ENCODE measurements at regions of chr7 and their contacts with region 1.

Region 1: DNA sequence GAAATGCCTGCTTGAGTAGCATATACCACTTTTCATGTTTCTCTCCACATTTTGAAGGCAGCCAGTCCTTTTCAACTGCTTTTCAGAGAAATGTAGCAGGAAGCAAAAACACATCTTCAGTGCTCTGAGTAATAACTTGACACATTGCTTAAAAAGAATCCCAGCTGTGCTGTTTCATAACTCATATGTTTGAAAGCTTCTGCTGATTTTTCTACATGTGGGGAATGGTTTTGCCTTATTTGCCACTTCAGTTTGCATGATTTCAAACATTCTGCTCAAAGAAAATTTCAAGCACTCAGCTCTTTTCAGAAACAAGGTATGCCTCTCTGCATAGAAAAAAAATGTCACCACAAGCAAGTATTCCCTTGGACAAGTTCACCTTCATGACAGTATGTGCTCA is 732.8 kb downstream of the POM121L12 start:
- DNase-seq: no peak
- H3K4me3 ChIP-seq: no peak overlapping the region
- H3K27ac ChIP-seq: no peak overlapping the region
- H3K4me1 ChIP-seq: no peaks in the 10 kb centered on the region
- H3K27me3 ChIP-seq: no peaks in the 10 kb centered on the region
- CTCF ChIP-seq: no peak
- POLR2A ChIP-seq: no peak

Region 2: DNA sequence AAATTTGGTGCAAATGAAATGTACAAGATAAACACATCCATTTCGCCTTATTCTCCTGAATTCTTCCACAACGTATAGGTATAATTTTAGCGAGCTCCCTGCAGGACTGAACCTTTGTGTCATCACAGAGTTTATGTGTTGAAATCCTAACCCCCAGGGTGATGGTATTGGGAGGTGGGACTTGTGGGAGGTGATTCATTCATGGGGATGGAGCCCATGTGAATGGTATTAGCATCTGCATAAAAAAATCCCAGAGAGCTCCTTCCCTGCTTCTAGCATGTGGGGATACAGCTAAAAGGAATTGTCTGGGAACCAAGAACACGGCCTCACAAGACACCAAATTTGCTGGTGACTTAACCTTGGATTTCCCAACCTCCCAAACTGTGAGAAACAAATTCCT is 32.6 kb after region 1 on chr7:
- intact Hi-C with region 1: no loop called
- DNase-seq: no peak
- H3K4me3 ChIP-seq: no peak overlapping the region
- H3K27ac ChIP-seq: no peak overlapping the region
- H3K4me1 ChIP-seq: no peaks in the 10 kb centered on the region
- H3K27me3 ChIP-seq: no peaks in the 10 kb centered on the region
- CTCF ChIP-seq: no peak
- POLR2A ChIP-seq: no peak

Region 3: DNA sequence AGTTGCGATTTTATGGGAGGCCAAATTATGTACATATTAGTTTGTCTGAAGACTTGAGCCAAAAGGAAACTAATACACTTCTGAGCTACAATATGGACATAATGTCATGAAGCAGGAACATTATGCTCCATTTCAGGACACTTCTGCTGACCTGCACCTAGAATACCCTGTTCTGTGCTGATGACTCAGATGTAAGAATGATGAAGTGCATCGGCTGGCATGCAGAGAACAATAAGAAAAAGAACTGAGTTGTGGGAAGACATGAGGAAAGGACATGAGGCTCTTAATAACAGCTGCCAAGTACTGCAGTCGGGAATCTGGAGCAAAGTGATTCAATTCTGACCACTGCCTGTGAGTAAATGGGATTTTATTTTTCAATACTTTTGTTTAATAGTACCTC is 581.0 kb after region 1 on chr7:
- intact Hi-C with region 1: loop called (anchors 10 kb)
- DNase-seq: no peak
- H3K4me3 ChIP-seq: no peak overlapping the region
- H3K27ac ChIP-seq: no peak overlapping the region
- H3K4me1 ChIP-seq: no peaks in the 10 kb centered on the region
- H3K27me3 ChIP-seq: no peaks in the 10 kb centered on the region
- CTCF ChIP-seq: no peak
- POLR2A ChIP-seq: no peak

Measured in breast epithelium (tissue), 4 donors.